ENCODE measurements at regions of chr1 and their contacts with region 1.

Region 1: GRCh38 chr1:194052514-194053333 is 866.3 kb upstream of the B3GALT2 start:
- DNase-seq: peak in 6 of 9 donors; percentile 21 to 54 (median 44)
- ATAC-seq: peak; percentile 56
- H3K4me3 ChIP-seq: peak overlapping the region; percentile 9
- H3K4me3 Mint-ChIP-seq: peak overlapping the region; percentile 41 to 83 (median 71)
- H3K27ac ChIP-seq: peak overlapping the region; percentile 63
- H3K27ac Mint-ChIP-seq: peak overlapping the region; percentile 93 to 98 (median 96)
- H3K4me1 ChIP-seq: peaks cover 7 to 61% of the 10 kb centered on the region in 2 donors
- H3K4me1 Mint-ChIP-seq: peaks cover 43 to 82% (median 69%) of the 10 kb centered on the region in 7 donors
- H3K27me3 ChIP-seq: no peaks in the 10 kb centered on the region
- H3K27me3 Mint-ChIP-seq: no peaks in the 10 kb centered on the region

Region 2: GRCh38 chr1:194062962-194063361 is 10.2 kb after region 1 on chr1:
- CTCF ChIA-PET with region 1: interaction called, 4 read pairs
- POLR2A ChIA-PET with region 1: interaction called, 5 read pairs
- intact Hi-C with region 1: loop called in 1 of 2 experiments (anchors 1 kb)
- DNase-seq: no peak
- ATAC-seq: no peak
- H3K4me3 ChIP-seq: no peak overlapping the region
- H3K4me3 Mint-ChIP-seq: no peak overlapping the region
- H3K27ac ChIP-seq: no peak overlapping the region
- H3K27ac Mint-ChIP-seq: no peak overlapping the region
- H3K4me1 ChIP-seq: peaks cover 6 to 34% of the 10 kb centered on the region in 2 donors
- H3K4me1 Mint-ChIP-seq: peaks cover 11 to 55% (median 39%) of the 10 kb centered on the region in 7 donors
- H3K27me3 ChIP-seq: no peaks in the 10 kb centered on the region
- H3K27me3 Mint-ChIP-seq: no peaks in the 10 kb centered on the region

Region 3: DNA sequence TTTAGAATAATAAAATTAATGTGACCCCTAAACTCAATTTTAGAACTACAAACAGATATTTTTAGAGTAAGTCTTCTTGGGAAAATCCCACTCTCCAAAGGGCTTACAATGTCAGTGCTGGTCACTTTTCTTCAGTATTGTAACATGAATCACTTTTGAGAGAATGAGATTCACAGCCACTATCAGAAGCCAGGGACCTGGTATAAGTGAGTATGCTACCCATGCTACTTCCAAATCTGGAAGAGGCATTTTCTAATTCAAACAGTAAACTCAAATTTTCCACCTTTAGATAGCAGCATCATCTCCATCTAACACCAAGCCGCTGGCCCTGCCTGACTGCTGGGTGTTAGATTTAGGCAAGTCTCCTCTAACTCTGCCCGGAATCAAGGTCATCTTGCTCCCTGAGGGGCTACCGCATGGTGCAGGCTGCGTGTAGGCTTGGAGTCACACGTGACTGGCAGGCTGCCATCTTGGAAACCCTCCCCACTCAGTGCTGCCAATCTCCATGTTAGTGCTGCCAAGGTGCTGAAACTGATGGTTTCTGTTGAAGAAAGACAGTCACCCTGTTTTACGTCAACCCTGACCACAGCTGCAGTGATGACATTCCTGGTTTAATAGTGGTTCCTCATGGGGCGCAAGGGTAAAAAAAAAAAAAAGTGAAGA is 16.6 kb after region 1 on chr1:
- CTCF ChIA-PET with region 1: interaction called, 4 read pairs
- POLR2A ChIA-PET with region 1: interaction called, 5 read pairs
- intact Hi-C with region 1: loop called in 1 of 2 experiments (anchors 1 kb)
- DNase-seq: no peak
- ATAC-seq: no peak
- H3K4me3 ChIP-seq: no peak overlapping the region
- H3K4me3 Mint-ChIP-seq: no peak overlapping the region
- H3K27ac ChIP-seq: no peak overlapping the region
- H3K27ac Mint-ChIP-seq: no peak overlapping the region
- H3K4me1 ChIP-seq: no peaks in the 10 kb centered on the region
- H3K4me1 Mint-ChIP-seq: peaks cover 0 to 12% (median 2%) of the 10 kb centered on the region in 7 donors
- H3K27me3 ChIP-seq: no peaks in the 10 kb centered on the region
- H3K27me3 Mint-ChIP-seq: no peaks in the 10 kb centered on the region

Region 4: DNA sequence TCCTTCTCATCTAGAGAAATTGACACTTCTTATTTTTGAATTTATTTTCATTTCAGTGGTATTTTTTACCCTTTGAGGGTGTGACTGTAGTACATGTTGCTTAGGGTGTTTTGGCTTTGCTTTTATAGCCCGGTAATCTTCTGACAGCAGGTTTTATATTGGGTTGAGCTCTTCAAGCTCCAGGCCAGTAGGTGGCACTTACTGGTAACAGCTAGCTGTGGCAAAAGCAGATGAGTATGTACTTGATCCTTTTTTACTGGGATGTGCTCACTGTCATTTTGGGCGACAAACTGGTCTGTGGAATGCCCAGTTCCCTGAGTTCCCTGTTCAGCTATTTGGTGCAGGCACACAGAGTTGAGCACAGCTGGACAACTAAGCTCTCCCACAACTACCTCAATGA is 49.9 kb after region 1 on chr1:
- CTCF ChIA-PET with region 1: no interaction called
- POLR2A ChIA-PET with region 1: no interaction called
- intact Hi-C with region 1: loop called in 1 of 2 experiments (anchors 2 kb)
- DNase-seq: no peak
- ATAC-seq: no peak
- H3K4me3 ChIP-seq: no peak overlapping the region
- H3K4me3 Mint-ChIP-seq: no peak overlapping the region
- H3K27ac ChIP-seq: no peak overlapping the region
- H3K27ac Mint-ChIP-seq: no peak overlapping the region
- H3K4me1 ChIP-seq: no peaks in the 10 kb centered on the region
- H3K4me1 Mint-ChIP-seq: peaks cover 0 to 20% (median 0%) of the 10 kb centered on the region in 7 donors
- H3K27me3 ChIP-seq: no peaks in the 10 kb centered on the region
- H3K27me3 Mint-ChIP-seq: no peaks in the 10 kb centered on the region

Region 5: DNA sequence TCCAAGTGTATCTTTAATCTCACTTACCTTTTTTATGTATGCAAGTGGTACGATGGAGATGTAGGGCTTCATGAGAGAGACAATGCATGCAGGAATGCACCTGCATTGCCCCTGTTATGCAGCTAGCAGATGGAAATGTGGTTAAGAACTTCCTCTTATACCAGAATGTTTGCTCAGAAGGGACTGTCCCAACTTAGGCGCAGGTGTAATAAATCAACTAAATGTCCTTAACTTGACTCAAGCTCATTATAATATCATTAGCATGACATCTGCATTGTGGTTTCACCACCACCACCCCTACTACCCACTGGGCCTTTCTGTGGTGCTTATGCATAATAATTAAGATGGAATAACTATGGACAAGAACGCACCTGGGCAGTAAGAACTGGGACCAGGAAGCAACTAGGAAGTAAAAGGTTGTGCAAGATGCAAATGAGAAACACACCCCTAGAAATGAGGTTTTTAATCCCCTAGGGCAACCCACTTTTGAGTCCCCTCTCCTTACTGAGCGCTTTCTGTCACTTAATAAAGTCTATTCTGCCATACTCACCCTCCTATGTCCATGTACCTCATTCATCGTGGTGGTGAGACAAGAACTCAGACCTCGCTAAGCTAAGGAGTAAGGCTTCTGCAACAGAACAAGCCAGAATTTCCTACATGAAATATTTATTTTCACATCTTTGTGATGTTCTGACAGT is 237.0 kb after region 1 on chr1:
- CTCF ChIA-PET with region 1: no interaction called
- POLR2A ChIA-PET with region 1: interaction called, 3 read pairs
- intact Hi-C with region 1: loop called in 1 of 2 experiments (anchors 5 kb)
- DNase-seq: peak in 8 of 9 donors; percentile 23 to 84 (median 76)
- ATAC-seq: peak; percentile 97
- H3K4me3 ChIP-seq: peak overlapping the region; percentile 0
- H3K4me3 Mint-ChIP-seq: peak overlapping the region; percentile 38 to 71 (median 54)
- H3K27ac ChIP-seq: no peak overlapping the region
- H3K27ac Mint-ChIP-seq: peak overlapping the region in 7 of 9 donors; percentile 43 to 84 (median 69)
- H3K4me1 ChIP-seq: peaks cover 14 to 21% of the 10 kb centered on the region in 2 donors
- H3K4me1 Mint-ChIP-seq: peaks cover 5 to 47% (median 40%) of the 10 kb centered on the region in 7 donors
- H3K27me3 ChIP-seq: no peaks in the 10 kb centered on the region
- H3K27me3 Mint-ChIP-seq: no peaks in the 10 kb centered on the region